ENCODE measurements at regions of chr12 and their contacts with region 1.

Region 1: DNA sequence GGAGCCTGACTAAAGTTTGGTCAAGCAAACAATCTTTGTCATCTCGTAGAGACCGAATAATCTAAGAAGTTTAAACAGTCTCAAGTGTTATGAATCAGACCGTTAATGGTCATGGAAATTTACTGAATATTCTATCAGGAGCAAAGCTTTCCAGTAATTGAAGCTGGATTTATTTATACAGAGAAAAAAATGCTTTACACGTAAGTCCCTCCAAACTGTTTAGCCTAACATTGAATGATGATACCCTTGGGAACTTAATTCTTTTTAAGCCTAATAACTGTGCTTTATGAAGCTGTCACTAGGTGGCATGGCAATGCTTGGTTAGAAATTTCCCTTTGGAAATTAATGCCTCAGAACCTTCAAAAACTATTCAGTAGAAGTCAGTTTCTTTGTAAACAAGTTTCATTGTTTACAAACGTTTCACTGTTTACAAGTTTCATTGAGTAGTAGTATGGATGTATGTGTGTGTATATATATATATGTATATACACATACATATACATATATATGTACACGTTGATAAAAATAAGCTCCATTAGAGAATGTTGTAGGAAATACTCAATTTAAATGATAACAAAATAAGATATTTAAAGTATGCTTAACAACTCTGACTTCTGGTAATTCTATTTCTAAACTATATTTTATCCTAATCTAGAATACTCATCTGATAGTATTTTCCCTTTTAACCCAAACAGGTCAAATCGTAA is 32.1 kb downstream of the DEPDC4 start:
- DNase-seq: peak in 1 of 2 experiments; percentile 63
- H3K4me3 ChIP-seq: peak overlapping the region; percentile 50; the same call in 1 of the 2 replicates
- H3K27ac ChIP-seq: peak overlapping the region; percentile 67
- H3K4me1 ChIP-seq: peaks cover 57% of the 10 kb centered on the region
- H3K27me3 ChIP-seq: no peaks in the 10 kb centered on the region
- CTCF ChIP-seq: peak; percentile 82

Region 2: GRCh38 chr12:100266835-100267618 is 32.3 kb after region 1 on chr12 and contains the starts of genes DEPDC4 and SCYL2:
- CTCF ChIA-PET with region 1: interaction called, 6 read pairs
- POLR2A ChIA-PET with region 1: interaction called, 8 read pairs
- intact Hi-C with region 1: loop called (anchors 1 kb)
- DNase-seq: peak; percentile 89 to 92
- H3K4me3 ChIP-seq: peak within 1 kb of the TSS; percentile 76
- H3K27ac ChIP-seq: peak within 1 kb of the TSS; percentile 87
- H3K4me1 ChIP-seq: peaks cover 21% of the 10 kb centered on the region
- H3K27me3 ChIP-seq: no peaks in the 10 kb centered on the region
- CTCF ChIP-seq: no peak
- total RNA-seq, gene DEPDC4: 1.8 and 2.9 TPM in 2 replicates
- total RNA-seq, gene SCYL2: 31.0 and 41.1 TPM in 2 replicates

Region 3: GRCh38 chr12:100348657-100349454 is 114.1 kb after region 1 on chr12:
- CTCF ChIA-PET with region 1: no interaction called
- POLR2A ChIA-PET with region 1: interaction called, 17 read pairs
- intact Hi-C with region 1: loop called (anchors 10 kb)
- DNase-seq: no peak
- H3K4me3 ChIP-seq: no peak overlapping the region
- H3K27ac ChIP-seq: no peak overlapping the region
- H3K4me1 ChIP-seq: no peaks in the 10 kb centered on the region
- H3K27me3 ChIP-seq: peaks cover 9% of the 10 kb centered on the region
- CTCF ChIP-seq: peak; percentile 65

Region 4: DNA sequence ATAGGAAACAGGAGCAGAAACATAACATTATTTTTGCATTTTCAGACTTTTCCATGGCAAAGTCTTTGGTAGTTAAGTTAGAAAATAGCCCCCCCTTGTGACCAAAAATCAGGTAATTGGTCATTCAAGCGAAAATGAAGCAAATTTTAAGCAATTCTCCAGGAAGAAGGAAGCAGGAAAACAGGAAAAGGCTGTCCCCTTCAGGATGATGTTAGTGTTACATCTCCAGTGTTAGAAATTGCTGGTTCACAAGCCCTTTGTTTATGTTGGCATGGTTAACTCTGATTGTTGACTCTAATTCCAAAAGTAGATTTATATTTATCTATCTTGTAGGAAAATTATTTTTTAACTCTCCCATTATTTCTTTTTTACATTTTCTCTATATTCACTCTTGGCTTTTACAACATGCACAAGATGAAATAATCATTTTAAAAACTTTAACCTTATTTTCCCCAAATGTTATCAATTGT is 319.9 kb after region 1 on chr12:
- CTCF ChIA-PET with region 1: no interaction called
- POLR2A ChIA-PET with region 1: no interaction called
- intact Hi-C with region 1: loop called (anchors 1 kb)
- DNase-seq: peak; percentile 25 to 69
- H3K4me3 ChIP-seq: no peak overlapping the region
- H3K27ac ChIP-seq: no peak overlapping the region
- H3K4me1 ChIP-seq: no peaks in the 10 kb centered on the region
- H3K27me3 ChIP-seq: peaks cover 13% of the 10 kb centered on the region; the same call in 1 of the 2 replicates
- CTCF ChIP-seq: peak; percentile 75

Region 5: GRCh38 chr12:100573292-100574186 is 338.8 kb after region 1 on chr12 and contains the start of gene GAS2L3:
- CTCF ChIA-PET with region 1: no interaction called
- POLR2A ChIA-PET with region 1: no interaction called
- intact Hi-C with region 1: loop called (anchors 1 kb)
- DNase-seq: peak; percentile 71 to 89
- H3K4me3 ChIP-seq: peak within 1 kb of the TSS; percentile 82
- H3K27ac ChIP-seq: peak within 1 kb of the TSS; percentile 37
- H3K4me1 ChIP-seq: peaks cover 11% of the 10 kb centered on the region
- H3K27me3 ChIP-seq: no peaks in the 10 kb centered on the region
- CTCF ChIP-seq: no peak
- total RNA-seq, gene GAS2L3: 28.6 and 31.9 TPM in 2 replicates

Region 6: DNA sequence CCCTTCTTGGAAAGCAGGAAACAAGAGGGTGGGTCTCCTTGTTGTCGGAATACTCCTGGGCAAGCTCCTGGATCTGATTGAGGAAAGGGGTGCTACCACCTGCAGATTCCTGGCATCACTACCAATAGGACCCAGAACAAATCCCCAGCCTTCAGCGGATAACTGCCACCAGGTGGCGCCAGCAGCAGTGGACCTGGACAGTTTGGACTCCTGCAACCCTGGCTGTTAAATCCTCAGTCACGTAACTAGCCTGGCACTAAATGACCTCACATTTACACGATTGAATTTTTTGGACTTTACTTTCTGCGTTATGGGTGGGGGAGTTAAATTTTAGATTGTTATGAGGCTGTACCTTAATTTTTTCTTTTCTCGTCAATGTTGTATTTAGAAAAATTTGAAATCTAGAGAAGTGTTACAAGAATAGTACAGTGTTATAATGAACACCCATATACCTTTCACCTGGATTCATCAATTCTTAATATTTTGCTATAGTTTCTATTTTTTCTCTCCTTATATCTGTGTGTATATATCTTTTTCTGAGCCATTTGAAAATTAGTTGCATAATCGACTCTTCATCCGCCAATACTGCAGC is 434.3 kb after region 1 on chr12:
- CTCF ChIA-PET with region 1: no interaction called
- POLR2A ChIA-PET with region 1: no interaction called
- intact Hi-C with region 1: loop called (anchors 5 kb)
- DNase-seq: peak; percentile 43 to 53
- H3K4me3 ChIP-seq: no peak overlapping the region
- H3K27ac ChIP-seq: no peak overlapping the region
- H3K4me1 ChIP-seq: no peaks in the 10 kb centered on the region
- H3K27me3 ChIP-seq: peaks cover 58% of the 10 kb centered on the region
- CTCF ChIP-seq: peak; percentile 86

Region 7: GRCh38 chr12:100733817-100734593 is 499.3 kb after region 1 on chr12:
- CTCF ChIA-PET with region 1: no interaction called
- POLR2A ChIA-PET with region 1: no interaction called
- intact Hi-C with region 1: loop called (anchors 10 kb)
- DNase-seq: no peak
- H3K4me3 ChIP-seq: no peak overlapping the region
- H3K27ac ChIP-seq: no peak overlapping the region
- H3K4me1 ChIP-seq: no peaks in the 10 kb centered on the region
- H3K27me3 ChIP-seq: no peaks in the 10 kb centered on the region
- CTCF ChIP-seq: peak; percentile 62